Right lobe of liver (tissue), 6 donors: ENCODE measurements at regions of chr22 and their contacts with region 1.

Region 1: DNA sequence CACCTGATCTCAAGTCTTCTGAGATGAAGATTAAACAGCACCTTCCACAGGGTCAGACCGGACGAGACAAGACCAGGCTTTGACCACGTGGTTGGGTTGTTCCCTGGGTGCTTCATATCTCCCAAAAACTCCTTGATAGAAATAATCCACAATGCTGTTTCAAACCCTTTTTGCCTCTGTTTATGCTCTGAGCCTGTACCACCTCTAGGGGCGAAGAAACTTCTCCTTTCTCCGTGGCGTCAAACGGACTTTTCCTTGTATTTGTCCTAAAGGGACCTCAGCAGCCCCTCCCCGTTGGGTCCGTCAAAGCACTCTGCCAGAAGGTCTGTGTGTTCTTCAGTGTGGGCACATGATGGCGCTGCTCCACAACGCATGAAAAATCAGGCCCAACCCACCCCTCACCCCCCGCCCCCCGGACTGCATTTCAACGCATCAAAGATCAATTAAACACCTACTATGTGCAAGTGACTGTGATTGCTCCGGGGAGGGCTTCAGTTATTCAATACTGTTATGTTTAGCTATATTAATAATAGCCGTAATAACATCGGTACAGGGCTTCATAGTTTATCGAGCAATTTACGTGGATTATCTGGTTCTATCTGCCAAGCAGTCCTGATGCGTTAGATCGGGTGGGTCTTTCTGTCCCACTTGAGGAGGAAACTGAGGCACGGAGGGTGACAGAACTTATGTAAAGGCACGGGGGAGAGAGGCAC is 17.3 kb upstream of the EIF3D start:
- DNase-seq: peak in 1 of 3 donors; percentile 47
- ATAC-seq: peak; percentile 50 to 62 (median 56)
- H3K4me3 ChIP-seq: no peak overlapping the region
- H3K27ac ChIP-seq: no peak overlapping the region
- H3K4me1 ChIP-seq: no peaks in the 10 kb centered on the region
- H3K27me3 ChIP-seq: no peaks in the 10 kb centered on the region
- CTCF ChIP-seq: peak in 3 of 4 donors; percentile 30 to 42 (median 35)
- POLR2A ChIP-seq: no peak

Region 2: DNA sequence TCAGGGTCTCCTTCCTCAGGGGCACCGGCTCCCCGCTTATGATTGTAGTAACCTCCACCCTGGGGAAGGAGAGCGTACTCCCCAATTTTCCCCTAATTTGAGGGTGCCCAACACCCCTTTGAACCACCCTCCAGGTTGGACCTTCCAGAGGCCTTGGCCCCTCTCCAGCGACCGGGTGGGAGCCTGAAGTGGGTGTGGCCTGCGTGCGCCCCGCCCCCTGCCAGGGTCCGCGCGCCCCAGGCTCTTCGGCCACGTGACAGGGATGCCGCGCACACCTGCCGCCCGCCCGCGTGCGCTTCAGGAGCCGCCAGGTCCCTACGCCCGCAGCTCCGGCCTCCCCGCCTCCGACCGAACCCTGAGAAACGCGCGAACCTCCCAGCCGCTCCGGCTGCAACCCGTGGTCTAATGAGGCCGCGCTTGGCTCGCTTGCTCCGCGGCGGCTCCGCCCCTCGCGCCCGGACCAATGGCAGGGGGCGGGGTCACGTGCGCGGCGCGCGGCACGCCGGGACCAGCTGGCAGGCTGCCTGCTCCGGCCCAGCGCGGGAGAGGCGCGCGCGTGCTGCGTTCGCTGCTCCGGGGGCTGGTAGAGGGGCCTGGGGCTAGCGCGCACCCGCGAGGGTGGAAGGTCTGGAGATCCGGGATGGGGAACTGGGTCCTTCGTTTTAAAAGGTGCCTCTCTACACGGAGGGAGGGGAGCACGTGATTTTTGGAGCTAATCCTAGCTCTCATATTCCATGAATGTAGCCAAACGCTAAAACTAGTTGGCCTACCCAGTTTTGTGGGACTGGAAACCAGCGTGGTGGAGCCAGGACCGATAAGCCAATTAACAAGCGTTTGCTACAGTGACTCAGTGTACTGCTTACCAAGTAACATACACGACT is 39.4 kb before region 1 on chr22 and contains the start of gene FOXRED2:
- intact Hi-C with region 1: no loop called
- DNase-seq: peak; percentile 90 to 91 (median 90)
- ATAC-seq: peak; percentile 80 to 91 (median 86)
- H3K4me3 ChIP-seq: peak within 1 kb of the TSS; percentile 59 to 63 (median 60)
- H3K27ac ChIP-seq: peak within 1 kb of the TSS; percentile 45 to 60 (median 60)
- H3K4me1 ChIP-seq: peaks cover 0 to 22% (median 4%) of the 10 kb centered on the region in 4 donors
- H3K27me3 ChIP-seq: no peaks in the 10 kb centered on the region
- CTCF ChIP-seq: no peak
- POLR2A ChIP-seq: peak; percentile 91
- total RNA-seq, gene FOXRED2: 9.6 to 14.0 (median 11.8) TPM

Region 3: GRCh38 chr22:36856121-36856791 is 310.0 kb after region 1 on chr22:
- intact Hi-C with region 1: loop called in 1 of 2 experiments (anchors 10 kb)
- DNase-seq: peak; percentile 91 to 93 (median 92)
- ATAC-seq: peak; percentile 86 to 93 (median 88)
- H3K4me3 ChIP-seq: no peak overlapping the region
- H3K27ac ChIP-seq: no peak overlapping the region
- H3K4me1 ChIP-seq: no peaks in the 10 kb centered on the region
- H3K27me3 ChIP-seq: no peaks in the 10 kb centered on the region
- CTCF ChIP-seq: peak; percentile 100
- POLR2A ChIP-seq: no peak